Activated T-helper 2 cell treated with anti-CD3 and anti-CD28 coated beads, Interferon-gamma antibody, Interleukin-2, Interleukin-4, amounts not matched to agents 10 μg/mL and 5 μg/mL and 100 μg/mL, durations not matched to agents 14 hours and 24 hours and 36 hours (primary cell): ENCODE measurements at regions of chr9 and their contacts with region 1.

Region 1: GRCh38 chr9:98118640-98119601 is at the start of gene TRIM14:
- DNase-seq: peak; percentile 64
- H3K4me3 Mint-ChIP-seq: peak within 1 kb of the TSS; percentile 82
- H3K27ac Mint-ChIP-seq: peak within 1 kb of the TSS; percentile 92
- H3K4me1 Mint-ChIP-seq: peaks cover 37% of the 10 kb centered on the region
- H3K27me3 Mint-ChIP-seq: no peaks in the 10 kb centered on the region
- total RNA-seq, gene TRIM14: 37.7 and 41.5 TPM in 2 replicates

Region 2: DNA sequence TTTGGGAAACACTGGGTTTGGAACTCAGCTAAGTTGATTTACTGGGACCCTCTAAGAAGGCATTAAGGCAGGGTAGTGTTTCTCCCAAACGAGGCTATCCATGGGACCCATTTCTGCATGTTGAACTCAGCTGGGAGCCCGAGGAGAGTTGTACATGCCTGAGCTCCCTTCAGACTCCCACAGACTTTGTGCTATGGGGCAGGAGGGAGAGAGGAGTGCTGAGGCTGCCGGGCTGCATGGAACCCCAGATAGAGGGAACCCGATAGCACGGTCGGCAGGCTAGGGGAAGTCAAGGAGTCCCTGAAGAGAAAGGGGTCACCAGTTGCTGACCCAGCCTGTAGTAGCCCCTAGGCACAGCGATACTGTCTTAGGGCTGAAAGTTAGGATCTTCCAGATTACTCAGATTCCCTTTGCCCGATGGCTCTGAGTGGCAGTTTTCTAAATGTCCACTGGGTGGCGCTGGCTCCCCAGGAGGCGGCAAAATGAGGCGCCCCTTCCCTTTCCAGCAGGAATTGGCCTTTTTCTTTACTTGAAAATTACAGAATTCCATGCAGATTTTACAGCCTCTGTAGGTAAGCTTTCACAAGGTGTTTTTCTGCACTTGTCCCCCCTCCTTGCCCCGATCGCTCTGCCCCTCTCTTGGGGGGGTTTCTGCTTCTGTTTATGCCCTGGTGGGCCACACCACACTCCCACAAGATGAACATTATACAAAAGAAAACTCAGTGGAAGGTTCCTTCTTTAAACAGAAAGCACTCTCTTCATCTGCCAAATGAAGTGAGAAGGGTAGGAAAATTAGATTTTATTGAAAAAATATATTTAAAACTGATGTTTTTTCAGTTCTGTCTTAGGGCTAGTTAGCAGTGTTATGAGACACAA is 44.6 kb before region 1 on chr9:
- intact Hi-C with region 1: loop called (anchors 2 kb)
- DNase-seq: peak; percentile 49
- H3K4me3 Mint-ChIP-seq: no peak overlapping the region
- H3K27ac Mint-ChIP-seq: peak overlapping the region; percentile 84
- H3K4me1 Mint-ChIP-seq: peaks cover 18% of the 10 kb centered on the region
- H3K27me3 Mint-ChIP-seq: no peaks in the 10 kb centered on the region

Region 3: GRCh38 chr9:98192503-98193335 is 73.8 kb after region 1 on chr9 and contains the start of gene CORO2A:
- intact Hi-C with region 1: loop called (anchors 1 kb)
- DNase-seq: peak; percentile 59
- H3K4me3 Mint-ChIP-seq: peak within 1 kb of the TSS; percentile 83
- H3K27ac Mint-ChIP-seq: no peak within 1 kb of the TSS
- H3K4me1 Mint-ChIP-seq: peaks cover 9% of the 10 kb centered on the region
- H3K27me3 Mint-ChIP-seq: peaks cover 14% of the 10 kb centered on the region
- total RNA-seq, gene CORO2A: 0.87 and 0.96 TPM in 2 replicates

Region 4: GRCh38 chr9:98263482-98264357 is 144.8 kb after region 1 on chr9:
- intact Hi-C with region 1: loop called (anchors 2 kb)
- DNase-seq: peak; percentile 71
- H3K4me3 Mint-ChIP-seq: no peak overlapping the region
- H3K27ac Mint-ChIP-seq: no peak overlapping the region
- H3K4me1 Mint-ChIP-seq: no peaks in the 10 kb centered on the region
- H3K27me3 Mint-ChIP-seq: peaks cover 20% of the 10 kb centered on the region

Region 5: DNA sequence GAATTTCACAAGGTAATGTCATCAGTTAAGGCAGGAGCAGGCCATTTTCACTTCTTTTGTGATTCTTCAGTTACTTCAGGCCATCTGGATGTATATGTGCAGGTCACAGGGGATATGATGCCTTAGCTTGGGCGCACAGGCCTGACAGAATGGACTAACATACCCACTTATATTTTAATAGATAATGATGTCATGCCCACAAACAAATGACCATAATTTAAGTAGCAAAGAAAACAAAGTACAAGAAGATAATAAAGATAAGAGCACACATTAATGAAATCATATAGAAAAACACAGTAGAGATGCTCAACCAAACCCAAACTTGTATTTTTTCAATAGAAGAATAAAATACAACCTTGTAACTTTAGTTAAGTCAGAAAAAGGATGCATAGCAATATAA is 156.2 kb after region 1 on chr9:
- intact Hi-C with region 1: no loop called
- DNase-seq: no peak
- H3K4me3 Mint-ChIP-seq: no peak overlapping the region
- H3K27ac Mint-ChIP-seq: no peak overlapping the region
- H3K4me1 Mint-ChIP-seq: no peaks in the 10 kb centered on the region
- H3K27me3 Mint-ChIP-seq: peaks cover 39% of the 10 kb centered on the region